ENCODE measurements at regions of chr12 and their contacts with region 1.

Region 1: DNA sequence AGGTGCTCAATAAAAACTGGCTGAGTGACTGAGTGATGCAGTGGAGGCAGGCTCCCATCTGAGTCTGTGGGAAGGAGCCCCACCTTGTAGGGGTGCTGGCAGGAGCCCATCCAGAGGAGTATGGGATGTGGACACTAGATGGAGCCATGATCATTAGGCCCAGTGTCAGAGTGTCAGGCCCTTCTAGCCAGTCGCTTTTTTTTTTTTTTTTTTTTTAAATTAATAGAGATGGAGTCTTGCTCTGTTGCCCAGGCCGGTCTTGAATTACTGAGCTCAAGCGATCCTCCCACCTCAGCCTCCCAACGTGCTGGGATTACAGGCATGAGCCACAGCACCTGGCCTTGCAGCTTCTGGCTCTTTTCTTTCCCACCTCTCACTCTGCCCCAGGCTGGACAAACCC is 11.5 kb downstream of the RITA1 start:
- DNase-seq: peak; percentile 84
- ATAC-seq: peak; percentile 94
- H3K4me3 ChIP-seq: no peak overlapping the region
- H3K4me3 Mint-ChIP-seq: peak overlapping the region; percentile 0
- H3K27ac ChIP-seq: no peak overlapping the region
- H3K27ac Mint-ChIP-seq: peak overlapping the region; percentile 73
- H3K4me1 ChIP-seq: peaks cover 12 to 18% of the 10 kb centered on the region in 2 donors
- H3K4me1 Mint-ChIP-seq: peaks cover 20% of the 10 kb centered on the region
- H3K27me3 ChIP-seq: no peaks in the 10 kb centered on the region
- H3K27me3 Mint-ChIP-seq: no peaks in the 10 kb centered on the region
- CTCF ChIP-seq: peak; percentile 73

Region 2: DNA sequence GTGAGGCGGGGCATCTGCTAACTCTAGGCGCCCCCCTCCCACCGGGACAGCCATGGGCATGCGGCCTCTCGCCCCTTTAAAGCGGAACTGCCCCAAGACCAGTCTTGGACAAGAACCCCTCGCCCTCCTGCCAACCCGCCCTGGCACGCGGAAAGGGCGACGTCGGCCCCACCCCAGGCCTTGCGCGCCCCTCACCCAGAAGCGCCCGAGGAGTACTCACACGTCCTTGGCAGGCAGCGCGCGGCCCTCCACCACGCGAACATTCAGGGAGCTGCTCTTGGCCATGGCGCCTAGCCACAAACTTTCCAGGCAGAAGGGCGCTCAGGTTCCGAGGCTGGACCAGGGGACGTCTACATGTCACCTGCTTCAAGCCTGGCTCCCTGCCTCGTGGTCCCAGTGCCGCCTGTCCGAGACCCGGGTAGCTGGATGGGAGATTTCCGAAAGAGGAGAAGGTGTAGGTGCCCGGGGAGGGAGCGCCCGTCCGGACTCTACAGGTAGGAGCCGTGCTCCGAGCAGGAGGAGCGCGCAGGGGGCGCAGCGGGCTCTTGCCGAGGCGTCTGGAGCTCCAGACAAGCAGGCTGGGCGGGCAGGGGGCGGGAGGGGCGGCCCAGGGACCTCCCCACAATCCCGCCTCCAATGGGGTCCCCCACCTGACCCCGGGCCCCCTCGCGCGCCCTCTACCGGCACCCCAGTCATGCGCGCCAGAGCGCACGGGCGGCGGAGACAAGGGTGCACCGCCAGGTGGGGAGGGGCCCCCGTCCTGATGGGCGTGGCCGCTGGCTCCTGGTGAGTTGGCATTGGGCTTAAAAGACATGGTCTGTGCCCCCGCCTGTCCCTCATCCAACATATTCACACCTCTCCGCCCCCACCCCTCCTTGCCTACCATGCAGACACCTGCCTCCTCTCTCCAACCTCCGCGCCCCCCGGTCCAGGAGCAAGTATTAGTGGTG is 61.5 kb before region 1 on chr12 and contains the start of gene RASAL1:
- CTCF ChIA-PET with region 1: no interaction called
- POLR2A ChIA-PET with region 1: no interaction called
- intact Hi-C with region 1: no loop called
- DNase-seq: peak; percentile 74
- ATAC-seq: peak; percentile 80
- H3K4me3 ChIP-seq: peak within 1 kb of the TSS in 4 of 5 experiments; percentile 24 to 46 (median 32)
- H3K4me3 Mint-ChIP-seq: peak within 1 kb of the TSS; percentile 84
- H3K27ac ChIP-seq: no peak within 1 kb of the TSS
- H3K27ac Mint-ChIP-seq: peak within 1 kb of the TSS; percentile 85
- H3K4me1 ChIP-seq: peaks cover 16 to 25% of the 10 kb centered on the region in 2 donors
- H3K4me1 Mint-ChIP-seq: peaks cover 26% of the 10 kb centered on the region
- H3K27me3 ChIP-seq: peaks cover 0 to 21% (median 6%) of the 10 kb centered on the region in 4 experiments
- H3K27me3 Mint-ChIP-seq: peaks cover 6% of the 10 kb centered on the region
- CTCF ChIP-seq: peak; percentile 70
- total RNA-seq, gene RASAL1: 11.0 and 13.9 TPM in 2 replicates

Region 3: GRCh38 chr12:113221181-113221997 is 24.4 kb after region 1 on chr12 and contains the start of gene TPCN1:
- CTCF ChIA-PET with region 1: interaction called, 46 read pairs
- POLR2A ChIA-PET with region 1: interaction called, 10 read pairs
- intact Hi-C with region 1: loop called (anchors 1 kb)
- DNase-seq: peak; percentile 100
- ATAC-seq: peak; percentile 89
- H3K4me3 ChIP-seq: peak within 1 kb of the TSS; percentile 69 to 92 (median 86)
- H3K4me3 Mint-ChIP-seq: peak within 1 kb of the TSS; percentile 90
- H3K27ac ChIP-seq: peak within 1 kb of the TSS; percentile 72 to 93
- H3K27ac Mint-ChIP-seq: peak within 1 kb of the TSS; percentile 89
- H3K4me1 ChIP-seq: peaks cover 32 to 55% of the 10 kb centered on the region in 2 donors
- H3K4me1 Mint-ChIP-seq: peaks cover 41% of the 10 kb centered on the region
- H3K27me3 ChIP-seq: no peaks in the 10 kb centered on the region
- H3K27me3 Mint-ChIP-seq: no peaks in the 10 kb centered on the region
- CTCF ChIP-seq: peak; percentile 21
- total RNA-seq, gene TPCN1: 258 and 267 TPM in 2 replicates

Region 4: GRCh38 chr12:113299619-113300237 is 102.7 kb after region 1 on chr12:
- CTCF ChIA-PET with region 1: interaction called, 5 read pairs
- POLR2A ChIA-PET with region 1: no interaction called
- intact Hi-C with region 1: loop called (anchors 10 kb)
- DNase-seq: no peak
- ATAC-seq: no peak
- H3K4me3 ChIP-seq: no peak overlapping the region
- H3K4me3 Mint-ChIP-seq: no peak overlapping the region
- H3K27ac ChIP-seq: no peak overlapping the region
- H3K27ac Mint-ChIP-seq: peak overlapping the region; percentile 37
- H3K4me1 ChIP-seq: peaks cover 11 to 19% of the 10 kb centered on the region in 2 donors
- H3K4me1 Mint-ChIP-seq: peaks cover 20% of the 10 kb centered on the region
- H3K27me3 ChIP-seq: no peaks in the 10 kb centered on the region
- H3K27me3 Mint-ChIP-seq: no peaks in the 10 kb centered on the region
- CTCF ChIP-seq: no peak

Region 5: GRCh38 chr12:113422030-113422885 is 225.3 kb after region 1 on chr12 and contains the start of gene SDSL:
- CTCF ChIA-PET with region 1: interaction called, 5 read pairs
- POLR2A ChIA-PET with region 1: no interaction called
- intact Hi-C with region 1: loop called (anchors 5 kb)
- DNase-seq: peak; percentile 74
- ATAC-seq: peak; percentile 93
- H3K4me3 ChIP-seq: peak within 1 kb of the TSS in 1 of 5 experiments; percentile 8
- H3K4me3 Mint-ChIP-seq: peak within 1 kb of the TSS; percentile 79
- H3K27ac ChIP-seq: no peak within 1 kb of the TSS
- H3K27ac Mint-ChIP-seq: peak within 1 kb of the TSS; percentile 53
- H3K4me1 ChIP-seq: peaks cover 10 to 18% of the 10 kb centered on the region in 2 donors
- H3K4me1 Mint-ChIP-seq: peaks cover 20% of the 10 kb centered on the region
- H3K27me3 ChIP-seq: peaks cover 0 to 7% (median 2%) of the 10 kb centered on the region in 4 experiments
- H3K27me3 Mint-ChIP-seq: peaks cover 14% of the 10 kb centered on the region
- CTCF ChIP-seq: no peak
- total RNA-seq, gene SDSL: 0.64 and 1.1 TPM in 2 replicates

Region 6: DNA sequence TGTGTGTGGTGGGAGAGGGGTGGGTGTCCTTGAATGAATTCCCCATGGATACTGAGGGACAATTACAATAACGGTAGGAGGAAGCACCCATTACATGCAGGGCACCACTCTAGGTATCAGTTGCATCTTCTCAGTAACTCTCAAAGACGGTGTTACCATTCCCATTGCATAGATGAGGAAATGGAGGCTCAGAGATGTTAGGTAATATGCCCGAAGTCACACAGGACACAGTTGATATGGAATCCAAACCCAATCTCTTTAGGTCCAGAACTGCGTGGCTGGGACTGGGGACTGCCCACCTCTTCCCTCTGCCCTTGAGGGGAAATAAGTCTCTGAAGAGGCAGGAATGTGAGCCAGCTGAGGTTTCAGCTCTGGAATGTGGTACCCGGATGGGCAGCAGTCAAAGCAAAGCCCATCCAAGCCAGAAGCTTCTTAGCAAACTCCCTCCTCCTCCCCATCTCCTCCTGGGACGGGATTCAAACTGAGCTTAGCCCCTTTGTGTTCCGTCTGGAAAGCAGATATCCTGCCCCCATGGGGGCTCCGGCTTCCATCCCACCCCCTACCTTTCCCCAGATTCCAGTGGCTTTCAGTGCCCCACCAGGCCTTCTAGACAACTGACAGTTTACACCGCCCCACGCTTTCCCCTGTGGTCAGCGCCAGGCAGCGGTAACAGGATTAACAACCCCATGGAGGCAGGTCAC is 581.6 kb after region 1 on chr12:
- CTCF ChIA-PET with region 1: no interaction called
- POLR2A ChIA-PET with region 1: no interaction called
- intact Hi-C with region 1: no loop called
- DNase-seq: no peak
- ATAC-seq: no peak
- H3K4me3 ChIP-seq: no peak overlapping the region
- H3K4me3 Mint-ChIP-seq: no peak overlapping the region
- H3K27ac ChIP-seq: no peak overlapping the region
- H3K27ac Mint-ChIP-seq: no peak overlapping the region
- H3K4me1 ChIP-seq: no peaks in the 10 kb centered on the region
- H3K4me1 Mint-ChIP-seq: no peaks in the 10 kb centered on the region
- H3K27me3 ChIP-seq: peaks cover 0 to 23% (median 11%) of the 10 kb centered on the region in 4 experiments
- H3K27me3 Mint-ChIP-seq: peaks cover 44% of the 10 kb centered on the region
- CTCF ChIP-seq: no peak